ENCODE measurements at regions of chr5 and their contacts with region 1.

Region 1: GRCh38 chr5:139293504-139294373 is at the start of gene MATR3:
- DNase-seq: peak; percentile 96
- ATAC-seq: peak; percentile 85
- H3K4me3 Mint-ChIP-seq: peak within 1 kb of the TSS; percentile 99
- H3K27ac Mint-ChIP-seq: peak within 1 kb of the TSS; percentile 99
- H3K4me1 Mint-ChIP-seq: peaks cover 36% of the 10 kb centered on the region
- H3K27me3 Mint-ChIP-seq: no peaks in the 10 kb centered on the region
- CTCF ChIP-seq: no peak
- total RNA-seq, gene MATR3: 228 to 290 TPM (median 233 TPM) in 3 replicates

Region 2: DNA sequence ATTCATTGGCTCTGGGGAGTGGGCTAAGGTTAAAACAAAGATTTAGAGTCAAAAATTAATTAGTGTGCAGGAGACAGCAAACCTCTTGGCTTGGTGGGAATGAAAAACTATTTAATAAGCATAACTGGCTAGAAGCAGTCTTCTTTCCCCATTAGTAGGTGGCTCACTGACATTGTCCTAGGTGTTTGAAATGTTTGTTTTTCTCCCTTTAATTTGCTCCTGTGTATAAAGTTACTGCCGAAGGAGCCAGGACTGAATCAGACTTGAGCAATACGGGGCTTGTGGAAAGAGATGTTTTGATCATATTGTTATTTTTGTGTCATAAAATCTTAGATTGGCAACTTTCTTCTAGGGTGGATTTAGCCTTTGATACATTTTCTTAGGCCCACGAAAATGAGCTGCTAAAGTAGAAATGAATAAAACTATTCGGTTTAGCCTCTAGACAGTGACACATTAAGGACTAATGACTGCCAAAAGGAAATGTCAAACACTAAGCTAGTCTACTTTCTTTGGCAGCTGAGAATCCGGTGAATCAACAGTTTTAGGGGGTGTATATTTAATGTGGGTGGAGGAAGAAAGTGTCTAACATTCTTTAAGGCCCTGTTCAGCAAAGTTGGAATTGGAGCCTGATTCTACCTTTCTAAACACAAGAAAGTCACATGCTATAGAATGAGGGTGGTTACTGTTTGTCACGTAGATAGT is 448.8 kb before region 1 on chr5:
- CTCF ChIA-PET with region 1: no interaction called
- POLR2A ChIA-PET with region 1: no interaction called
- DNase-seq: no peak
- ATAC-seq: no peak
- H3K4me3 Mint-ChIP-seq: no peak overlapping the region
- H3K27ac Mint-ChIP-seq: peak overlapping the region; percentile 67
- H3K4me1 Mint-ChIP-seq: peaks cover 61% of the 10 kb centered on the region
- H3K27me3 Mint-ChIP-seq: no peaks in the 10 kb centered on the region
- CTCF ChIP-seq: no peak

Region 3: DNA sequence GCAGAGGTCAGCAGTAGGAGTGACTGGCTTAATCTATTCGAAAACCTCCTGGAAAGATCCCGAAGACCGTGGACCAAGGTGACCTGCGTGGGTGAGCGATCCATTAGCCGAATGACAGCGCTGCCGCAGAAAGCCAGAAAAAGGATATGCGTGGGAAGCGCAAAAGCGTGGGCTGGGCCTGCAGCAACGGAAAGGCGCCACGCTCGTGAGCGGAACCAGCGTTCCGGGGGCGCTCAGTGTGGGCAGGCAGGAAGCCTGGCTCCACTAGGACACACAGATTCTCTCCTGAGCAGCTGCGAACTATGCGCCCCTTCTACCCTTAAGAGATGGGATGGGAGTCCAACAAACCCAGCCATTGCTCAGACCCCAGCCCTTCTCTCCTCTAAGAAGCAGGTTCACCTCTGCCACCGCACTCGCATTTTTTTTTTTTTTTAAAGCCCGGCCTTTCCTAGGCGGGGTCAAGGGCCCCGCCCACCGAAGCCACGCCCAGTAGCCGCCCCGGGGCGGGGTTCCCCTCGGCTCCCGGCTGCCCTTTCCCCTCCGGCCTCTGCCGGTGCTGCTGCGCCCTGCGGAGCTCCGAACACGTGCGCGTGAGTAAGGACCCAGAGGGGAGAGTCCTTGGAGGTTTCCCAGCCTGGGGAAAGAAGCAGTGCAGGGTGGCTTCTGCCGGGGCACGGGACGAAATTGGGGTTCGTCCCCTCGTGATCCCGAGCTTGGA is 20.0 kb before region 1 on chr5:
- CTCF ChIA-PET with region 1: interaction called, 3 read pairs
- POLR2A ChIA-PET with region 1: interaction called, 15 read pairs
- DNase-seq: peak; percentile 88
- ATAC-seq: peak; percentile 79
- H3K4me3 Mint-ChIP-seq: peak overlapping the region; percentile 96
- H3K27ac Mint-ChIP-seq: peak overlapping the region; percentile 96
- H3K4me1 Mint-ChIP-seq: peaks cover 45% of the 10 kb centered on the region
- H3K27me3 Mint-ChIP-seq: no peaks in the 10 kb centered on the region
- CTCF ChIP-seq: no peak

Region 4: DNA sequence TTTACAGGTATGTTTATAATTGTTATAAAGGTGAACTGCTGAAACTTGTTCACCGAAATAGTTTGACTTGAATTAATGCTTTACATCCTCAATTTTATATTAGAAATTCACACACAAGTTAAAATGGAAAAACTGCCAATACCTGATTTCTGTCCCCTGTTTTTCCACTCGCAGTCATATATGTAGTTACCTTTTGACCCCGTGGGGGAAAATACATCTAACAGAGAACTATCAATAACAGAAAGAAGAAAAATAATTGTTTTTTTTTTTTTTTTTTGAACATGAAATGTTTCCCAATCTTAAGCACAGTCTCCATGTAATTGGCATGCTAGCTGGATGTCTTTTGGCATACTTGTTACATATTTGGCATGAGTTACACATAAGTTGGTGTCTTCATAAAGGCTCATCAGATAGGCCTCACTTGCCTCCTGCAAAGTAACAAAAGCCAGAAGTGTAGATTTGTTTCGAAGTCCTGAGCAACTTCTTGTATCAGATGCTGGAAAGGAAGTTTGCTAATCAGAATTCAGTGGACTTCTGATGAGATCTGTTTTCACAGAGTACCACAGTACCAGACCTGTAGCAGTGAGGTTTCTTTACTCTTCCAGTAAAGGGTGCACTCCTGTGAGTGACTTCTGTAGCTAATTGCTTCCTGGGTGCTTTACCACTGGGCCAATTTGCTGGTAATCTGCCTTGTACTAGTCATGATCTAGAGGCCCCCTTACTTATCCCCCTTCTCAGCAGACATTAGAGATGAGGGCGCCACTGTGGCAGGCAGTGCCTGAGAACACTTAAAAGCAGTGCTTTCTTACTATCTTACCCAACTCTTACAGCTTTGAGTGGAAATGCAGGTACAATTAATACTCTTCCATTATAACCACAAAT is 318.2 kb after region 1 on chr5:
- CTCF ChIA-PET with region 1: no interaction called
- POLR2A ChIA-PET with region 1: no interaction called
- DNase-seq: no peak
- ATAC-seq: no peak
- H3K4me3 Mint-ChIP-seq: no peak overlapping the region
- H3K27ac Mint-ChIP-seq: peak overlapping the region; percentile 70
- H3K4me1 Mint-ChIP-seq: peaks cover 3% of the 10 kb centered on the region
- H3K27me3 Mint-ChIP-seq: no peaks in the 10 kb centered on the region
- CTCF ChIP-seq: no peak

Measured in WTC11 (cell line).